ENCODE measurements at regions of chr2 and their contacts with region 1.

Region 1: GRCh38 chr2:43343573-43344304 is 117.3 kb upstream of the ZFP36L2 start:
- DNase-seq: peak; percentile 70
- H3K4me3 ChIP-seq: no peak overlapping the region
- H3K27ac ChIP-seq: peak overlapping the region; percentile 74 to 84 (median 84)
- H3K4me1 ChIP-seq: peaks cover 30 to 72% (median 47%) of the 10 kb centered on the region in 4 donors
- H3K27me3 ChIP-seq: no peaks in the 10 kb centered on the region
- CTCF ChIP-seq: no peak
- EP300 ChIP-seq: no peak
- POLR2A ChIP-seq: no peak

Region 2: DNA sequence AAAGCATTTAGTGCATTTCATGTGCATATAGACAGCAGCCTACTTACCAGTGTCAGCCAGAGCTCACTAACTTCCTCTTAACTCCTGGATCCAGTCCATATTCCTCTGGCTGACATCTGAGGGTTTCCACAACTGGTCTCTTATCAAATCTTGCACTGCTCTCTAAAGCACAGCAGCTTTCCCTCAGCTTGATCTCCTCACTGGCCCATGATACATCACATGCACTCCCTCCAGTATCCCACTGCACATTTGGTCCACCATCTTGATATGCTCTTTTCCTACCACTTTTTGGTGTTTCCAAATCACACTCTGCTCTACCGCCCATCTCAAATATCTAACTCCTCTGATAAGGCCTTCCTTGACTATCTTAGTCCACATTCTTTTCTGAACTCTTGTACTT is 12.3 kb before region 1 on chr2:
- in situ Hi-C with region 1: no loop called
- intact Hi-C with region 1: no loop called
- DNase-seq: no peak
- H3K4me3 ChIP-seq: no peak overlapping the region
- H3K27ac ChIP-seq: peak overlapping the region; percentile 30 to 77 (median 58)
- H3K4me1 ChIP-seq: peaks cover 16 to 59% (median 25%) of the 10 kb centered on the region in 4 donors
- H3K27me3 ChIP-seq: no peaks in the 10 kb centered on the region
- CTCF ChIP-seq: no peak
- EP300 ChIP-seq: no peak
- POLR2A ChIP-seq: no peak

Region 3: DNA sequence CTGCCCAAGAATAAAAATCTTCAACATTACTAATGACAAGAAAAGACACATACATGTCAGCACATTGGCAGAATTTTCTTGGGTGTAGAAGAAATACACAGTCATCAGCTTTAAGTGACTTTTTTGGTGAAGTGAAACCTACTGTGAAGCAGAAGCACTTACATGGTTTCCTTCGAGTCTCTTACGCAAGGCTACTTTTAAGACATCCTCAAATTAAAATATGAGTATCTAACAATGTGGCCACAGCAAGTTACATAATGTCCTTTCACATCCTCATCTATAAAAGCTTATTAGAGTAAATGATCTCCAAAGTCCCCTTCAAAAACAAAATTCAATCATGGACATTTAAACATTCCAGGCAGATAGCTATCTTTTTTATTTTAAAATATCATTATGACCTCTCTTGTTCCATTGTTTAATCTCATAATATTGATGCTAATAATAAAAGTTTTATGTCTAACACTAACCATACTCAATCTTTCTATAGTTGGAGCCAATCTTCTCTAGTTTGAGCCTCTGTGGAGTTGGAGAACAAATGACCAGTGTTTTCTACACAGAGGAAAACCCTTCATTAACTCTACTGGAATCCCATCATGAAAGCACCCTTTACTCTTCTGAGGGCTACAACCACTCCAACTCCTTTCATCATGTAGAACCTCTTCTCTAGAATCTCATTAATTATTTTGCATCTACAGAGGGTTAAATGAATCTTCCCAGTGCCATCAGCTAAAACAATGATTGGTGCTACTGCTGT is 64.8 kb after region 1 on chr2:
- in situ Hi-C with region 1: no loop called
- intact Hi-C with region 1: loop called (anchors 10 kb)
- DNase-seq: no peak
- H3K4me3 ChIP-seq: no peak overlapping the region
- H3K27ac ChIP-seq: peak overlapping the region; percentile 13 to 27 (median 19)
- H3K4me1 ChIP-seq: peaks cover 0 to 38% (median 7%) of the 10 kb centered on the region in 4 donors
- H3K27me3 ChIP-seq: no peaks in the 10 kb centered on the region
- CTCF ChIP-seq: no peak
- EP300 ChIP-seq: no peak
- POLR2A ChIP-seq: no peak

Region 4: DNA sequence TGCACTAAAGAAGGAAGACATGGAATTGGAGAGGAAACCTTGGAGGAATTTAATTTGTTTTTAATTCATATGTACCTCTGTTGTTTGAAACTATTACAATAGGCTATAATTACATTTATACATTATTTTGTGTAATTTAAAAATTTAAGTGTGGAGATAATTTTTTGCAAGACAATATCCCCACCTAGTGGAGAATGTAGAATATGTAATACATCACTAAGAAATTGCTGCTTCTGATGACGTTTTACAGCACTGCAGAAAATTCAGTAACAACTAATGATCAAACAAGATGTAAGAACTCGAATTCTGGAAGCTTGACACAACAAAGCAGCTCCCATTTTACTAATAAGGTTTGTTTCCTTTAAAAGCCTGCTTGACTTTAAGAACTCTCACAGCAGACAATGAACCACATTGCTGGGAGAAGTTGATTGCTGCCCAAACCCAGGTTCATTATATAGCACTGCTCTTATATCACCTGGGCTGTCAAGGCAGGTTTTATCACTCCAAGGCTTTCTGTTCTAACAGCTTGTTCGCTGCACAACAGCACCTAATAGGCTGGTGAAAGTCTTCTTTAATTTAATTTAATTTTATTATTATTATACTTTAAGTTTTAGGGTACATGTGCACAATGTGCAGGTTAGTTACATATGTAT is 198.7 kb after region 1 on chr2:
- in situ Hi-C with region 1: no loop called
- intact Hi-C with region 1: no loop called
- DNase-seq: no peak
- H3K4me3 ChIP-seq: no peak overlapping the region
- H3K27ac ChIP-seq: peak overlapping the region in 1 of 4 donors; percentile 10
- H3K4me1 ChIP-seq: peaks cover 0 to 27% (median 10%) of the 10 kb centered on the region in 4 donors
- H3K27me3 ChIP-seq: no peaks in the 10 kb centered on the region
- CTCF ChIP-seq: peak; percentile 60 to 74 (median 63)
- EP300 ChIP-seq: no peak
- POLR2A ChIP-seq: no peak